ENCODE measurements at regions of chr3 and their contacts with region 1.

Region 1: DNA sequence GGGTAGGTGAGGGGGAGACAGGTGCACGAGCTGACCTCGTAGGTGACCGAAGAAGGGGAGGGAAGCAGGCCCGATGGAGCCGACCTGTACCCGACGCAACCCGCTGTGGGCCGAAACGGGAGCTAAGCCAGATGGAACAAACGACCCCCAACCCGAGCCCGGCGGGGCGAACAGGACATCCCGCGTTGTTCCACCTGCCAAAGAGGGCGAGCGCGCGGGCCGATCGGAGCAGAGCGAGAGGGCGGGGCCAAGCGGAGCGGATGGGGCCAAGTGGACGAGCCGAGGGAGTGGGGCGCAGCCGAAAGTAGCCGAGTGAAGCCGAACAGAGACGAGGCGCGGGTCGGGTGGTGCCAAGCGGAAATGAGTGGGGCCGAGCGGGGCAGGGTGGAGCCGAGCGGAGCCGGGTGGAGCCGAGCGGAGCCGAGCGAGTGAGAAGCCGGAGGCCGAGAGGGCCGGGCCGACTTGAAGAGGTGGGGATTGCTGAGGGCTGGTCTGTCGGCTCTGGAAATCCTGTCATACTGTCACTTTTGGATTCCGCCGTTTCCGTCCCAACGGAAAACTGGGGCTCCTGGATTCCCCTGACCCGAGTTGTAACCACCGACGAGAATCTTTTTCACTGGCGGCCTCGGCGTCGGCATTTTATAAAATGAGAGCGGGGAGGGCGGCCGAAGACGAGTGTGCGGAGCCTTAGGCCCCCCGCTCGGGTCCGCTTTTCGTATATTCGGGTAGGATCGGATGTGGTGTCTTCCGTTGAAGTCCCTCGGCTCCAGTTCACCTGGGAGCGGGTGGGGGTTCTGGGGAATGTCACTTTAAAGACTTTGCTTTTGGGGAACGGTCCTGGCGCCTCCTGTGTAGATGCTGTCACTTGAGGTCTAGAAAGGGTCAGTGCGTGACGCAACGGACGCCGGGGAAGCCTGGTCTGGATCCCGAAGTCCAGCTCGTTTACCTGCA is 15.6 kb upstream of the WNT7A start:
- DNase-seq: peak; percentile 98
- H3K4me3 ChIP-seq: peak overlapping the region; percentile 61 to 69
- H3K27ac ChIP-seq: no peak overlapping the region; a peak in 1 of 4 replicates
- H3K4me1 ChIP-seq: peaks cover 7 to 12% of the 10 kb centered on the region in 2 experiments; a peak in 3 of 4 replicates
- H3K27me3 ChIP-seq: no peaks in the 10 kb centered on the region
- CTCF ChIP-seq: no peak
- EP300 ChIP-seq: no peak
- RAD21 ChIP-seq: no peak

Region 2: GRCh38 chr3:13884851-13885703 is 10.4 kb before region 1 on chr3:
- CTCF ChIA-PET with region 1: interaction called, 45 read pairs
- POLR2A ChIA-PET with region 1: no interaction called
- DNase-seq: peak; percentile 72
- H3K4me3 ChIP-seq: peak overlapping the region in 1 of 2 experiments; percentile 28; a peak in 1 of 4 replicates
- H3K27ac ChIP-seq: no peak overlapping the region
- H3K4me1 ChIP-seq: peaks cover 0 to 4% of the 10 kb centered on the region in 2 experiments; a peak in 1 of 4 replicates
- H3K27me3 ChIP-seq: peaks cover 11% of the 10 kb centered on the region; the same call in 1 of the 2 replicates
- CTCF ChIP-seq: peak; percentile 66
- EP300 ChIP-seq: no peak
- RAD21 ChIP-seq: peak; percentile 72

Region 3: GRCh38 chr3:14124615-14125190 is 229.3 kb after region 1 on chr3 and contains the starts of genes CHCHD4 and TMEM43:
- CTCF ChIA-PET with region 1: interaction called, 37 read pairs
- POLR2A ChIA-PET with region 1: interaction called, 10 read pairs
- DNase-seq: peak; percentile 99
- H3K4me3 ChIP-seq: peak within 1 kb of the TSS; percentile 88 to 99
- H3K27ac ChIP-seq: peak within 1 kb of the TSS; percentile 90 to 93
- H3K4me1 ChIP-seq: peaks cover 15 to 34% of the 10 kb centered on the region in 2 experiments
- H3K27me3 ChIP-seq: no peaks in the 10 kb centered on the region
- CTCF ChIP-seq: no peak
- EP300 ChIP-seq: no peak
- RAD21 ChIP-seq: no peak
- polyA plus RNA-seq, gene CHCHD4: 15.4 and 17.3 TPM in 2 replicates
- polyA plus RNA-seq, gene TMEM43: 105 and 123 TPM in 2 replicates

Region 4: DNA sequence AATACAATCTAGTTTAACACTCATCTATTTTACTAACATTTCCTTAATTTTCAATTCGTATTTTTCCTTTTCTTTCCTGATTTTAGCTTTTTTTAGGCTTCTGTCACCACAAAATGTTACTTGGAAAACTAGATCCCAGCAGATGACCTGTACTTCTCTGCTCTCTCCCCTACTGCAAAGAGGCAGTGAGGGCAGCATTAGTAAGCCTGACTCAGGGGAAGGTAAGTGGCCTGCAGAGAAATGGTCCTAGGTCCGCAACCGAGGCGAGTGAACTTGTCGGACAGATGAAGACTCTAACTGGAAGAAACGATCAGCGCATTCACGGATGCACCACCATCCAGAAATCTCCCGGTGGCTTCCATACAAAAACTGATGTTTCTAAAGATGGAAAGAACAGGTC is 249.8 kb after region 1 on chr3:
- CTCF ChIA-PET with region 1: interaction called, 12 read pairs
- POLR2A ChIA-PET with region 1: interaction called, 3 read pairs
- DNase-seq: no peak
- H3K4me3 ChIP-seq: no peak overlapping the region
- H3K27ac ChIP-seq: peak overlapping the region; percentile 78 to 100
- H3K4me1 ChIP-seq: peaks cover 16 to 27% of the 10 kb centered on the region in 2 experiments
- H3K27me3 ChIP-seq: no peaks in the 10 kb centered on the region
- CTCF ChIP-seq: no peak
- EP300 ChIP-seq: no peak
- RAD21 ChIP-seq: no peak

Region 5: GRCh38 chr3:14203521-14204079 is 308.2 kb after region 1 on chr3:
- CTCF ChIA-PET with region 1: interaction called, 45 read pairs
- POLR2A ChIA-PET with region 1: no interaction called
- DNase-seq: peak; percentile 70
- H3K4me3 ChIP-seq: peak overlapping the region in 1 of 2 experiments; percentile 21; a peak in 1 of 4 replicates
- H3K27ac ChIP-seq: no peak overlapping the region; a peak in 1 of 4 replicates
- H3K4me1 ChIP-seq: peaks cover 3 to 17% of the 10 kb centered on the region in 2 experiments; a peak in 2 of 4 replicates
- H3K27me3 ChIP-seq: no peaks in the 10 kb centered on the region
- CTCF ChIP-seq: peak; percentile 82
- EP300 ChIP-seq: no peak
- RAD21 ChIP-seq: peak; percentile 95

Region 6: GRCh38 chr3:14261229-14261628 is 365.8 kb after region 1 on chr3:
- CTCF ChIA-PET with region 1: interaction called, 13 read pairs
- POLR2A ChIA-PET with region 1: no interaction called
- DNase-seq: peak; percentile 88
- H3K4me3 ChIP-seq: peak overlapping the region in 1 of 2 experiments; percentile 42; a peak in 1 of 4 replicates
- H3K27ac ChIP-seq: no peak overlapping the region
- H3K4me1 ChIP-seq: no peaks in the 10 kb centered on the region
- H3K27me3 ChIP-seq: 0 out of 2 replicates have a peak, but pooled peaks cover 6% of the 10 kb centered on the region
- CTCF ChIP-seq: peak; percentile 98
- EP300 ChIP-seq: no peak
- RAD21 ChIP-seq: peak; percentile 99